ENCODE measurements at regions of chr13 and their contacts with region 1.

Region 1: GRCh38 chr13:30465585-30466357 is at the start of gene HMGB1:
- DNase-seq: peak; percentile 96 to 98
- ATAC-seq: peak; percentile 95 to 99 (median 98)
- H3K4me3 ChIP-seq: peak within 1 kb of the TSS; percentile 54 to 98 (median 88)
- H3K27ac ChIP-seq: peak within 1 kb of the TSS; percentile 96 to 100 (median 99)
- H3K4me1 ChIP-seq: peaks cover 9 to 42% (median 35%) of the 10 kb centered on the region in 9 donors
- H3K27me3 ChIP-seq: no peaks in the 10 kb centered on the region
- CTCF ChIP-seq: no peak
- total RNA-seq, gene HMGB1: 142 to 180 (median 159) TPM

Region 2: GRCh38 chr13:30257468-30258099 is 208.2 kb before region 1 on chr13:
- intact Hi-C with region 1: loop called in 4 of 10 experiments (anchors 5 to 10 kb)
- DNase-seq: peak in 1 of 2 donors; percentile 3
- ATAC-seq: peak; percentile 25 to 92 (median 76)
- H3K4me3 ChIP-seq: no peak overlapping the region
- H3K27ac ChIP-seq: peak overlapping the region in 6 of 10 donors; percentile 13 to 70 (median 32)
- H3K4me1 ChIP-seq: peaks cover 0 to 22% (median 9%) of the 10 kb centered on the region in 9 donors
- H3K27me3 ChIP-seq: no peaks in the 10 kb centered on the region
- CTCF ChIP-seq: no peak

Region 3: GRCh38 chr13:30364876-30365275 is 100.9 kb before region 1 on chr13:
- intact Hi-C with region 1: loop called in 1 of 10 experiments (anchors 5 kb)
- DNase-seq: peak in 1 of 2 donors; percentile 17
- ATAC-seq: peak in 4 of 8 donors; percentile 41 to 69 (median 68)
- H3K4me3 ChIP-seq: peak overlapping the region in 1 of 10 donors; percentile 10
- H3K27ac ChIP-seq: peak overlapping the region in 9 of 10 donors; percentile 38 to 82 (median 57)
- H3K4me1 ChIP-seq: peaks cover 0 to 42% (median 31%) of the 10 kb centered on the region in 9 donors
- H3K27me3 ChIP-seq: no peaks in the 10 kb centered on the region
- CTCF ChIP-seq: no peak

Region 4: GRCh38 chr13:30422054-30422839 is 43.5 kb before region 1 on chr13 and contains the start of gene UBE2L5:
- intact Hi-C with region 1: loop called in 4 of 10 experiments (anchors 1 to 5 kb)
- DNase-seq: peak; percentile 73 to 84
- ATAC-seq: peak; percentile 90 to 97 (median 93)
- H3K4me3 ChIP-seq: peak within 1 kb of the TSS; percentile 26 to 80 (median 66)
- H3K27ac ChIP-seq: peak within 1 kb of the TSS; percentile 85 to 98 (median 93)
- H3K4me1 ChIP-seq: peaks cover 0 to 20% (median 9%) of the 10 kb centered on the region in 9 donors
- H3K27me3 ChIP-seq: no peaks in the 10 kb centered on the region
- CTCF ChIP-seq: no peak
- total RNA-seq, gene UBE2L5: 0.42 TPM in 1 of 10 donors, not detected in the others

Region 5: GRCh38 chr13:30435911-30436451 is 29.8 kb before region 1 on chr13:
- intact Hi-C with region 1: no loop called
- DNase-seq: no peak
- ATAC-seq: no peak
- H3K4me3 ChIP-seq: no peak overlapping the region
- H3K27ac ChIP-seq: no peak overlapping the region
- H3K4me1 ChIP-seq: peaks cover 0 to 9% (median 0%) of the 10 kb centered on the region in 9 donors
- H3K27me3 ChIP-seq: peaks cover 0 to 7% (median 0%) of the 10 kb centered on the region in 7 donors
- CTCF ChIP-seq: no peak

Region 6: DNA sequence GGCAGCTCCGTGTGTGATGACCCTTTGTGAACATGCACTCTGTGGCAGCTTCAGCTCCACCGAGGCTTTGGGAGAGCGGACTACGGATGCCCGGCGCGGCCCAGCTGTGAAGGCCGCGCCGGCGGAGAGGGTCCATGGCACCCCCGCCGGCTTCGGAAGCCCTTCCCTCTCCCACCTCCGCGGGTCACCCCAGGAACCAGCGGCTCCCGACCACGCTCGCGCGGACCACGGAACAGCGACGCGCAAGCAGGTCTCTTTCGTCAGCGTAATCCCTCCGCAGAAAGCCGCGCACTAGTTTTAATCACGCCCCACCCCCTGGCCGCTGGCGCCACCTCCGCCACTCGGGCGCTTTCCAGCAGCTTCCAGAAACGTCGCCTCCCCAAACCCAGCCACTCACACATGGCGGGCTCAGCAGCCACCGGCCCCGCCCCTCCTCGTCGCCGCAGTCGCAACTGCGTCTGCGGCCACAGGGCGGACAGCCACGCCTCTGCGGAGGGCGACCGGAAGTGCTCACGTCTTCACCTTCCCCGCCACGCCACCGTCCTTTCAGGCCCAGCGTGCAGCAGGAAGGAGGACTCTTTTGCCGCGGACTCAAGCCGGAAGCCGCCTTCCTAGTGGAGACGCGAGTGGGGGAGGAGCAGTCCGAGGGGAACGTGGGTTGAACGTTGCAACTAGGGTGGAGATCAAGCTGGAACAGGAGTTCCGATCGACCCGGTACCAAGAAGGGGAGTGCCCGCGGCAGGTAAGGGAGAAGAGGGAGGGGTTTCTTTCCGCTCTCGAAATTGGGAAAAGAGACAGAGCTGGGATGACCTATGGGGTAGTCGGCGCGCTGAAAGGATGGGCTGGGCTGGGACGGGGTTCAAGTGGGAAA is 151.8 kb after region 1 on chr13 and contains the start of gene USPL1:
- intact Hi-C with region 1: loop called in 8 of 10 experiments (anchors 1 to 5 kb)
- DNase-seq: peak; percentile 98 to 99
- ATAC-seq: peak; percentile 95 to 99 (median 97)
- H3K4me3 ChIP-seq: peak within 1 kb of the TSS; percentile 63 to 91 (median 80)
- H3K27ac ChIP-seq: peak within 1 kb of the TSS; percentile 96 to 100 (median 99)
- H3K4me1 ChIP-seq: peaks cover 0 to 44% (median 27%) of the 10 kb centered on the region in 9 donors
- H3K27me3 ChIP-seq: no peaks in the 10 kb centered on the region
- CTCF ChIP-seq: peak in 8 of 9 donors; percentile 14 to 47 (median 38)
- total RNA-seq, gene USPL1: 8.9 to 10.6 (median 9.8) TPM

Region 7: GRCh38 chr13:30865123-30866049 is 399.6 kb after region 1 on chr13:
- intact Hi-C with region 1: loop called in 1 of 10 experiments (anchors 10 kb)
- DNase-seq: peak; percentile 67 to 70
- ATAC-seq: peak; percentile 78 to 86 (median 82)
- H3K4me3 ChIP-seq: no peak overlapping the region
- H3K27ac ChIP-seq: peak overlapping the region in 8 of 10 donors; percentile 42 to 80 (median 60)
- H3K4me1 ChIP-seq: peaks cover 5 to 33% (median 18%) of the 10 kb centered on the region in 9 donors
- H3K27me3 ChIP-seq: peaks cover 0 to 7% (median 0%) of the 10 kb centered on the region in 7 donors
- CTCF ChIP-seq: peak; percentile 79 to 93 (median 90)